Lower leg skin (tissue), 4 donors: ENCODE measurements at regions of chr5 and their contacts with region 1.

Region 1: DNA sequence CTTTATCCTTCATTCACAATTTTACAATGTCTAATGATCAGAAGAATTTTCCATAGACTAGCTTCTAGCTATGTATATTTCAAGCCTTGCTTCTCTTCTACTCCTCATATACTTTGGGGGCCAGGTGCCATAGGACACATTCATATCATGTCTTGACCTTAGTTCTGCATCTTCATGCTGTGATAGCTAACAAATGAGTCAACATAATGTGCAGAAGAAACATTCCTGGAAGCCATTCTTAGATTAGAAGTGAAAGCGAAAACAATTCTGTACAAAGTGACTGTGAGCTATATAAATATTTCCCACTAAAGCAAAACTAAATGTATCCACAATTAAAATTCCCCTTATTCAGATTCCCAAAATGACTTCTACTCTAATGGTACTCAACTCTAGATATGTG is 320.2 kb upstream of the NREP start:
- DNase-seq: no peak
- H3K4me3 ChIP-seq: no peak overlapping the region
- CTCF ChIP-seq: no peak
- POLR2A ChIP-seq: no peak

Region 2: DNA sequence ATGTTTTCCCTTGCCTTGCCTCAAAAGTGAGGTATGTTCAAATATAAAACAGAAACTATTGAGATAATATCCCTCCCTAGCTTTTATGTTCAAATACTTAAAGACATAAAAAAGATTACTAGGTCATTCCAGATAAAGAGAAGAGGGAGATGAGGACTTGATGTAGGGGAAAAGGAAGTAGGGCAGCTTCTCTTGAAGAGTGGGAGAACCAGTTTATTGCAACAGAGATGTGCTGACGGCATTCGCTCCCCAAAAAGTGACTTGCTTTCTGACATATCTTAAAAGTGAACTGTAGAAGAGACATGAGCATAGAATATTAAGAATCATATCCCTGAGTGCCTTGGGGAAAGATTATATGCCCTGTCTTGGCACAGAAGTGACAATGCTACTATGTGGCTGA is 10.0 kb after region 1 on chr5:
- intact Hi-C with region 1: loop called (anchors 1 kb)
- DNase-seq: no peak
- H3K4me3 ChIP-seq: no peak overlapping the region
- CTCF ChIP-seq: no peak
- POLR2A ChIP-seq: no peak

Region 3: DNA sequence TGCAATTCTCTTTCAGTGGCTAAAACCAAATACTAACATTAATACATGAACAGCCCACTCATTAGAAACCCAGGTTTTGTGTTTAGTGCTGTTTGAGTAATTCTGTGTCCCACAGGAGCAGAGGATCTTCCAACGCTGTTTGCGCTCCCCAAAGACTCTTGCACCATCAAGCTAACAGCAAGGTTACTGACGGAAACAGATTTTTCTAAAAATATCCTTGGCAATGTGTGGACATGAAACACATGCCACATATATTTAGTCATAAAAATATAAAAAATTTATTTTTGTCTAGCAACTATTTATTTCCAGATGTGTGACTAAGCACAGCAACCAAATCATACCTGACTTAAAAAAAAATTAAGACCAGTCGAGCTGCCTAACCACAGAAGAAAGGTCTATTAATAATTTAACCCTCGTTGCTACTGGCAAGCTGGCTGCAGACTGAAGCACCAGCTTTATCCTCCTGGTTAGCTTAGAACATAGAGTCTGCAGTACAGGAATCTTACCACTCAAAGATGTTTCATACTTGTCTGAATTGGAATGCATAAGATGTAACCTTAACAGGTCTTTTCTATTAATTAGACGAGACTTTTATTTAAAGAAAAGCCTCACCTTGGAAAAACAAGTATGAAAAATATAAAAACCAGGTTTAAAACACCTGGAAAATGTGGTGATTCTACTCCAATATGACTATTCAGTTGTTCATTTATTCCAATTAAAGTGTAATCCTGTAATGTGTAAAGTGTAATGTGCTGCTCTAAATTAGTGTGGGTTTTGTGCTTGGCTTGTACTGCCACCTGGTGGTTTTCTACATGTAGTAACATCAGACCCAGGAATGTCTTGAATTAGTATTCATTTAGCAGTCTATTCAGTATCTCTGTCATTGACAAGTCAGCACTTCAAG is 69.4 kb after region 1 on chr5:
- intact Hi-C with region 1: no loop called
- DNase-seq: peak in 1 of 2 donors; percentile 62
- H3K4me3 ChIP-seq: no peak overlapping the region
- CTCF ChIP-seq: peak in 1 of 3 donors; percentile 69
- POLR2A ChIP-seq: no peak

Region 4: DNA sequence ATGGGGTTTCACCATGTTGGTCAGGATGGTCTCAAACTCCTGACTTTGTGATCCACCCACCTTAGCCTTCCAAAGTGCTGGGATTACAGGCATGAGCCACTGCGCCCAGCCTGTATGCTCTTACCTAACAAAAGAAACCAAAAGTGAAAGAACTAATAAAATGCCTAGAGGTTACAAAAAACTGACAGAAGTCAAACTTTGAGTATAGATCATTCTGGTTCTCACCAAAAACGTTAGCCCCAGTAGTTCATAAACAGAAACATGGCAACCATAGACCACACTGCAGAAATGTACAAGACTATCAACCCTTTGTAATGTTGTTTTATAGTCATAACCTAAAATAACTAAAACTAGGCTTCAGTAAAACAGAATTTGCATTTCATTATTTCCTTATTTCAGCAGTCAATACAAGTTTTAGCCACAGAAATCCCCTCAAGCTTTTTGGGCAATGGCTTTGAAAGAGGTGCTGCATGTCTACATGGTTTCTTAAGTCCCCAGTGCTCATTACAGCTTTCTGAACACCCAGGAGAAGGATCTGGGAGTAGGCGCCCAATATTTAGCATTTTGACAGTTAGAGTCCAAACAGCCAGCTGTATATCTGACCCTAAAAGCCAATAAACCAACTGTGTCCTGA is 269.3 kb after region 1 on chr5:
- intact Hi-C with region 1: no loop called
- DNase-seq: no peak
- H3K4me3 ChIP-seq: no peak overlapping the region
- CTCF ChIP-seq: no peak
- POLR2A ChIP-seq: no peak